HEK293 (cell line): ENCODE measurements at regions of chr1 and their contacts with region 1.

Region 1: DNA sequence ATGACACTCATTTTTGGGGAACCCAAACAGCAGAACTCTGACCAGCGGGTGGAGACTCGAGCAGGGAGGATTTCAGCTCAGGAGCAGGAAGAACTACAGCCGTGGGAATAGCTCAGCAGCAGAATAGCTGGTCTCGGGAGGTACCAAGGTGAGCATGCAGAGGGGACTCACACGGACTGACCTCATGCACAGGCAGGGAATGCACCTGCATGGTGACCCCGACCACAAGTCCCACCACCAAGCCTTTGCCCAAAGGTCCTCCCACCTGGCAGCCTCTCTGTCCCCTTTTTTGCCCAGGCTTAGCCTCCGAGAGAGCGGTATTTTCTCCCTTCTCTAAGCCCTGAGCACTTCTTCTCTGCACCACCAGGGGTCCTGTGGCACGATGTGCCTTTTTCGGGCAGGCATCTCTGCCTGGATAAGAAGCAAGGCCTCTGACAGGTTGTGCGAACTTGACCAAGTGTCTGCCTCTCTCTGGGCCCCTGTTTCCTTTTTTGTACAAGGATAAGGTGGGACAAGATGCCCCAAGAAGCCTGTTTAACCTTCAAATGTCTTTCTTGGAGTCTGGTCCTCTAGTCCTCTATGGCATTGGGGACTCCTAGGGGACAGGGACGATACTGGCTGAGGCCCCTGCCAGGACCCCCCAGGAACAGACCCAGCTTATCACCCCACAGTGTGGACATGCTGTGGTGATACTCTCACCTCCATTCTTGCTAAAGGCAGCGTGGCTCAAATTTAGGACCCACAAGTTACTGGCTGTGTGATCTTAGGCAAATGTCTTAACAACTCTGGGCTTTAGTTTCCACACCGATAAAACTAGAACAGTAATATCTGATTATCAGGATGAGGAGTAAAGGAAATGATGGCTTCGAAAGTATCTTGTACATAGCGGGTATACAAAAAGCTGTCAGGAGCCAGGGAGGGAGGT is 9.0 kb upstream of the FGR start:
- H3K4me3 ChIP-seq: no peak overlapping the region
- H3K27ac ChIP-seq: no peak overlapping the region
- H3K4me1 ChIP-seq: no peaks in the 10 kb centered on the region
- CTCF ChIP-seq: peak; percentile 71; the same call in 1 of the 2 replicates

Region 2: GRCh38 chr1:27300341-27301051 is 343.5 kb before region 1 on chr1:
- CTCF ChIA-PET with region 1: no interaction called
- POLR2A ChIA-PET with region 1: no interaction called
- H3K4me3 ChIP-seq: no peak overlapping the region
- H3K27ac ChIP-seq: no peak overlapping the region
- H3K4me1 ChIP-seq: no peaks in the 10 kb centered on the region
- CTCF ChIP-seq: peak; percentile 92

Region 3: DNA sequence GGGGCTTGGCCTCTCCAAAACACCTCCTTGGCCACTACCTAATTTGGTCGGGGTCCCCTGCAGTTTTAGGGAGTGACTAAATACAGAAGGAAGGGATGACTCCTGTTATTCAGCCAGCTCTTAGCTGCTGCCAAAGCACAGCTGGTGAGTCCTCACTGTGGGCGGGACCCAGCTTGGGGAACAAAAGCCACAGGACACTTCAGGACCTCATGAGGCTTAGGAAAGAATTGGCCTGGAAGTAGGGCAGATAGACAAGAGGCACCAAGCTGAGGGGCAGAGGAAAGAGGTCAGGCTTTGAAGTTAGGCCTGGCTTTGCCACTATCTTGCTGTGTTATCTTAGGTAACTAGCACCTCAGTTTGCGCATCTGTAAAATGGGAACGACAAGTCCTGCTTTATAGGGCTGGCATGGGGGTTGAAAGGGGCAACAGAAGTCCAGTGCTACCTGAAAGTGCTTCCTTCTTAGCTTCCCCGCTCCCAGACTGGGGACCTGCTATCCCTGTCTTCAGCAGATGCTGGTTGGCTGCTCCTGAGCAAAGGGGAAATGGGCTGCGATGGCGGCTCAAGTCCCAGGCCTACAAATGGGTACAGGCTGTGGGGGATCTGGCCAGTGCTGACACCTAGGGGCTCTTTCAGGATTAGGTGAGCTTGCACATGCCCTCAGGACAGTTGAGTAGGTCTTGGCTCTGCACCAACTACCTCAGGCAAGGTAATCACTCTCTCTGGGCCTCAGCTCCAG is 12.4 kb after region 1 on chr1:
- CTCF ChIA-PET with region 1: interaction called, 32 read pairs
- POLR2A ChIA-PET with region 1: no interaction called
- H3K4me3 ChIP-seq: no peak overlapping the region
- H3K27ac ChIP-seq: no peak overlapping the region
- H3K4me1 ChIP-seq: no peaks in the 10 kb centered on the region
- CTCF ChIP-seq: no peak

Region 4: DNA sequence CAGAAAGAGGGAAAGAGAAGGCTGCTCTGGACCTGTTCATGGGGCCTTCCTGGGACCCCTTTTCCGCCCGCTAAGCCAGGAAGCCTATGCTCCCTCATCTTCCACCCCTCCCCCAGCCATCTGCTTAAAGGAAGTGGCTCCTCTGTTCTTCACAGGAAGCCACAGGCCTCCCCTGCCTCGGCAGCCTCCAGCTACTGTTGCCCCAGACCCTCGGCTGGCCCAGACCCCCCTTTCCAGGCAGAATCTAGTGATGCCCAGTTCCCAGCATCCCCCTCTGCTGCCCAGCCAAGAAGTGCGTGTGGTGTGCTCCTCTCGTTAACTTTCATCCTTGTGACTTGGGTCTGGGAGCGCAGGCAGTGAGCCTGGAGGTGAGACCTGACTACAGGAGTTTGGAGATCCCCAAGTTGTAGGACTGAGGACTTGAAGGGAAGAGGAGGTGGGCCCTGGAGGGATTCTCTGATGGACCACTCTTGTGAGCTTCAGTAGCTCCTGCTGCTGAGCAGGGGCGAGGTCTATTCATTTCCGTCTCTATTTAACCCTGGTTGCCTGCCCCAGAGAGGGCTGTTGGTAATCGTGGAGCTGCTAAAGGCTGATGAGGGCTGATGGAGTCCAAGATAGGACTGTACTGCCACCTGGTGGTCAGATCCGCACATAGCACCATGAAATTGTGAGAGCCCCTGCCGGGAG is 18.9 kb after region 1 on chr1:
- CTCF ChIA-PET with region 1: interaction called, 32 read pairs
- POLR2A ChIA-PET with region 1: no interaction called
- H3K4me3 ChIP-seq: no peak overlapping the region
- H3K27ac ChIP-seq: no peak overlapping the region; the same call in 1 of the 2 replicates
- H3K4me1 ChIP-seq: no peaks in the 10 kb centered on the region
- CTCF ChIP-seq: peak; percentile 88